ENCODE measurements at regions of chr7 and their contacts with region 1.

Region 1: GRCh38 chr7:120272261-120272660 is 714 bp upstream of the KCND2 start:
- DNase-seq: no peak
- ATAC-seq: peak; percentile 43 to 84 (median 64)
- H3K4me3 ChIP-seq: peak overlapping the region; percentile 66
- H3K27ac ChIP-seq: no peak overlapping the region
- H3K4me1 ChIP-seq: no peaks in the 10 kb centered on the region
- H3K27me3 ChIP-seq: peaks cover 2 to 14% (median 3%) of the 10 kb centered on the region in 3 donors
- CTCF ChIP-seq: peak; percentile 65

Region 2: DNA sequence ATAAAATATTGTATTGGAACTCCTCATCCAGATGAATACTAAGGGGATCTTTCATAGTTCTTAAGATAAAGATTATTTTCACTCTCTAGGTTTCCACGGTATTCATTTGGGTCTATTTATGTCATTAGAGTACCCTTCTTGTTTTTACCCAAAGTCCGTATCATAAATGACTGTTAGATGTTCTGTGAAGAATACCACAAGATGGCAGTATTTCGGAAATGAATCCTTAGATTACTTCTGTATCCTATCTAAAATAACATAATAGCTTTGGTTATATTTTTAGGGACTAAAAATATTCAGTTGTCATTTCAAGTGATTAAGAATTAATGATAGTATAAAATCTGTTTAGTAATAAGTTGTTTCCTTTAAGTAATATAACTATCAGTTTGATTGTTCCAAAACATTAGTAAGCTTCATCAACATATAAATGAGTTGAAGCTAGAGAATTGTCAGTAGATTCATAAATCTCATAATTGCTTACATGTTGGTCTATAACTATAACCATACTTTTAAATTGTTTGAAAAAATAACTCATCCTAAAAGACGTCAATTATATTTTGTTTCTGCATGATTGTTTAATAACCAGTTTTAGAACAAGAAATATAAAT is 336.7 kb before region 1 on chr7:
- intact Hi-C with region 1: loop called (anchors 2 to 5 kb)
- DNase-seq: no peak
- ATAC-seq: peak in 2 of 4 donors; percentile 49 to 65
- H3K4me3 ChIP-seq: no peak overlapping the region
- H3K27ac ChIP-seq: no peak overlapping the region
- H3K4me1 ChIP-seq: no peaks in the 10 kb centered on the region
- H3K27me3 ChIP-seq: no peaks in the 10 kb centered on the region
- CTCF ChIP-seq: peak; percentile 49

Region 3: GRCh38 chr7:120320218-120320961 is 48.1 kb after region 1 on chr7:
- intact Hi-C with region 1: no loop called
- DNase-seq: no peak
- ATAC-seq: no peak
- H3K4me3 ChIP-seq: no peak overlapping the region
- H3K27ac ChIP-seq: no peak overlapping the region
- H3K4me1 ChIP-seq: no peaks in the 10 kb centered on the region
- H3K27me3 ChIP-seq: no peaks in the 10 kb centered on the region
- CTCF ChIP-seq: no peak

Measured in psoas muscle (tissue), 8 donors.